ENCODE measurements at regions of chr1 and their contacts with region 1.

Region 1: GRCh38 chr1:151702936-151703335 is 13.7 kb downstream of the CELF3 start:
- DNase-seq: no peak
- ATAC-seq: no peak
- H3K4me3 Mint-ChIP-seq: no peak overlapping the region
- H3K27ac Mint-ChIP-seq: no peak overlapping the region
- H3K4me1 Mint-ChIP-seq: peaks cover 3% of the 10 kb centered on the region
- H3K27me3 Mint-ChIP-seq: no peaks in the 10 kb centered on the region

Region 2: GRCh38 chr1:151680812-151681211 is 22.1 kb before region 1 on chr1:
- CTCF ChIA-PET with region 1: no interaction called
- POLR2A ChIA-PET with region 1: no interaction called
- intact Hi-C with region 1: loop called in 1 of 2 experiments (anchors 2 kb)
- DNase-seq: no peak
- ATAC-seq: no peak
- H3K4me3 Mint-ChIP-seq: no peak overlapping the region
- H3K27ac Mint-ChIP-seq: no peak overlapping the region
- H3K4me1 Mint-ChIP-seq: no peaks in the 10 kb centered on the region
- H3K27me3 Mint-ChIP-seq: no peaks in the 10 kb centered on the region

Measured in activated CD4-positive, alpha-beta T cell treated with anti-CD3 and anti-CD28 coated beads for 36 hours (primary cell).